Activated CD4-positive, alpha-beta T cell treated with anti-CD3 and anti-CD28 coated beads for 36 hours (primary cell): ENCODE measurements at regions of chr3 and their contacts with region 1.

Region 1: DNA sequence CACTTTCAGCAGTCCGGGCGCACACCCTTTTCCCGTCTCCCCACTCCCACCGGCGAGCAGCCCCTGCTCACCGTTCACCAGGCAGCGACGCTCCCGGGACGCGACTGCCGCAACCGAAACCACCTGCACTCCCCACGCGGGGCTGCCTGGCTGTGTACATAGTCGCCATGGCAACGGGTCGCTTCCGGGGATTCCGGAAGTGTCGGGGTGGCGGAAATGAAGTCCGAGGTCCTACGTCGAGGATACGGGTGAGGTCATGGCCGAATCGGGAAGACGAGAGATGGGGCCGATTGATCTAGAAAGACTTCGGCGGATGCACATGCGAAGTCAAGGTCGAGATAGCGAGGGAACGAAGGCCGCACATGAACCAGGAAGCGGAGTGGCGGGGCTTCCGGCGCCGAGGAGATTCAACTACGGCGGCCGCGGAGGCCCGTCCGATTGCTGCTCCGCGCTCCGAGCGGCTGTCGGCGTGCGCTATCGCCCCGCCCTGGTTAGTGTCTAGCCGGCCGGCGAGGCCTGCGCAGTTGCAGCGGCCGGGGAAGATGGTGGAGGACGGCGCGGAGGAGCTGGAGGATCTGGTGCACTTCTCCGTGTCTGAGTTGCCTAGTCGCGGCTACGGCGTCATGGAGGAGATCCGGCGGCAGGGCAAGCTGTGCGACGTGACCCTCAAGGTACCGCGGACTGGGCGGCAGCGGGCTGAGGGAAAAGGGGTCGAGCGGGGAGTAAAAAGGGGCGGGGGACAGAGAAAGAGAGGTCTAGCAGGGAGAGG is at the starts of genes KIF9 and KLHL18:
- DNase-seq: peak; percentile 97
- ATAC-seq: peak; percentile 91
- H3K4me3 Mint-ChIP-seq: peak within 1 kb of the TSS; percentile 95
- H3K27ac Mint-ChIP-seq: peak within 1 kb of the TSS; percentile 99
- H3K4me1 Mint-ChIP-seq: peaks cover 31% of the 10 kb centered on the region
- H3K27me3 Mint-ChIP-seq: no peaks in the 10 kb centered on the region
- total RNA-seq, gene KIF9: 2.7 to 5.3 TPM
- total RNA-seq, gene KLHL18: 19.0 to 22.4 TPM

Region 2: DNA sequence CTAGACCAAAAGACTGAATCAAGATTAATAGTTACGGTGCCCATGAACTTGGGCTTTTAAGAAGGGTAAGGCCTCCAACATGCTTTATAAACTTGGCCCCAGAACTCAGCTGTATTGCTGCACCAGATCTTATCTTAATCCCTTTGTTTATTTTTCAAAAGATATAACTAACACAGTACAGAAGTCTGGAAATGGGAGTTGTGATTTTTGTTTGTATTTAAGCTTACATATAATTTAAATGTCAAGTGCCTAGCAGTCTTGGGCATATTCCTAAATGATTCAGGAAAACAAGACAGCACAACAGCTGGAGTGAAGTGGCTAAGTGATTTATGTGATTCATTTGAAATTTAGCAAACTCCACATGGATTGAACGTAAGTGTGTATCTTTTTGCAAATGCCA is 247.0 kb before region 1 on chr3:
- CTCF ChIA-PET with region 1: no interaction called
- POLR2A ChIA-PET with region 1: no interaction called
- intact Hi-C with region 1: loop called in 1 of 2 experiments (anchors 1 kb)
- DNase-seq: no peak
- ATAC-seq: no peak
- H3K4me3 Mint-ChIP-seq: no peak overlapping the region
- H3K27ac Mint-ChIP-seq: no peak overlapping the region
- H3K4me1 Mint-ChIP-seq: peaks cover 41% of the 10 kb centered on the region
- H3K27me3 Mint-ChIP-seq: no peaks in the 10 kb centered on the region

Region 3: GRCh38 chr3:47324278-47324865 is 41.8 kb after region 1 on chr3:
- CTCF ChIA-PET with region 1: interaction called, 3 read pairs
- POLR2A ChIA-PET with region 1: no interaction called
- intact Hi-C with region 1: loop called (anchors 2 to 5 kb)
- DNase-seq: peak; percentile 66
- ATAC-seq: peak; percentile 88
- H3K4me3 Mint-ChIP-seq: no peak overlapping the region
- H3K27ac Mint-ChIP-seq: no peak overlapping the region
- H3K4me1 Mint-ChIP-seq: no peaks in the 10 kb centered on the region
- H3K27me3 Mint-ChIP-seq: no peaks in the 10 kb centered on the region

Region 4: GRCh38 chr3:47513125-47513929 is 230.7 kb after region 1 on chr3 and contains the start of gene ELP6:
- CTCF ChIA-PET with region 1: no interaction called
- POLR2A ChIA-PET with region 1: no interaction called
- intact Hi-C with region 1: loop called in 1 of 2 experiments (anchors 1 kb)
- DNase-seq: peak; percentile 99
- ATAC-seq: peak; percentile 97
- H3K4me3 Mint-ChIP-seq: peak within 1 kb of the TSS; percentile 91
- H3K27ac Mint-ChIP-seq: peak within 1 kb of the TSS; percentile 96
- H3K4me1 Mint-ChIP-seq: peaks cover 20% of the 10 kb centered on the region
- H3K27me3 Mint-ChIP-seq: no peaks in the 10 kb centered on the region
- total RNA-seq, gene ELP6: 27.8 to 40.3 TPM

Region 5: GRCh38 chr3:48301020-48301796 is 1018.6 kb after region 1 on chr3:
- CTCF ChIA-PET with region 1: no interaction called
- POLR2A ChIA-PET with region 1: no interaction called
- intact Hi-C with region 1: loop called in 1 of 2 experiments (anchors 1 kb)
- DNase-seq: peak; percentile 97
- ATAC-seq: peak; percentile 85
- H3K4me3 Mint-ChIP-seq: peak within 1 kb of the TSS; percentile 92
- H3K27ac Mint-ChIP-seq: peak within 1 kb of the TSS; percentile 98
- H3K4me1 Mint-ChIP-seq: peaks cover 27% of the 10 kb centered on the region
- H3K27me3 Mint-ChIP-seq: no peaks in the 10 kb centered on the region